Natural killer cell (primary cell): ENCODE measurements at regions of chr21 and their contacts with region 1.

Region 1: DNA sequence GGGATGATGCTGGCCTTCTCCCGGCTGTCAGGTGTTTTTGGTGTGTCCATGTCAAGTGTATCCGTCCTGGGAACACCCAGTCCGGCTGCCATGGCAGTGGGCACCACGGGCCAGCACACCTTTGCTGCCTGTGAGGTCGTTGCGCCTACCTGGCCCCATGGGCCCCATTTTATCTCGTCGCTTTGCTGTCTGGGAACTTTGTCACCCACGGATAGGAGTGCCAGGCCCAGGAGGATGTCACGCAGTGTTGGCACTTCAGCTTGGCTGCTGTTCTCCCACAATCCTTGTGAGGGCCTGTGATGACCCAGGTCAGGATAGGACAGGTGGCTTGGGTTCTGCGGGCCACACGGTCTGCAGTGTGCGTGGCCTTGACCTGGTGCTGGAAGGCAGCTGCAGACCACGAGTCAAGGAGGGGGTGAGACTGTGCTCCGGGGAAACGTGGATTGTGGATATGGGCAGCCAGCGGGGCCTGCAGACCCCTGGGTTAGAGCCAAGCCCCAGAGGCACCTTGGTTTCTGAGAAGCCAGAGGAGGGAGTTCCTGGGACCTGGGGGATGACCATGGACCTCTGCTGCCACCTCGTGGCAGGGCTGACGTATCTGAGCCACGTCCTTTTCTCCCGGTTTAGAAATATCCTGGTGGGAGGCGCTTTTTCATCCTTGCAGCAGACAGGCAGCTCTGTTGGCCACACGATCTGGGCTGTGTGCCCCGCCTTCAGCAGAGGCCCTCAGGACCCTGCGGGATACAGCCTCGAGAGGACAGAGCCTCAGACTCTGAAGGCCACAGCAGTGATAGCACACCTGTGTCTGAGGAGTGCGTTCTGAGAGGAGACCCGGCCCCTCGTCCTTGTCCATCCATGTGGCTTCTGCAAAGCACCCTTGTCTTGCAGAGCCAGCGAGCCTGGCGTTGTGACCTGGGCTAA is 161.1 kb upstream of the COL6A1 start:
- DNase-seq: peak; percentile 36 to 90
- ATAC-seq: peak; percentile 64 to 78 (median 67)
- H3K4me3 ChIP-seq: no peak overlapping the region
- H3K4me3 Mint-ChIP-seq: no peak overlapping the region
- H3K27ac ChIP-seq: no peak overlapping the region
- H3K27ac Mint-ChIP-seq: no peak overlapping the region
- H3K4me1 ChIP-seq: no peaks in the 10 kb centered on the region
- H3K4me1 Mint-ChIP-seq: no peaks in the 10 kb centered on the region
- H3K27me3 ChIP-seq: no peaks in the 10 kb centered on the region
- H3K27me3 Mint-ChIP-seq: peaks cover 14 to 20% of the 10 kb centered on the region in 2 donors
- CTCF ChIP-seq: peak; percentile 53

Region 2: GRCh38 chr21:44742418-44743153 is 1077.8 kb before region 1 on chr21:
- intact Hi-C with region 1: no loop called
- DNase-seq: peak in 1 of 2 donors; percentile 67
- ATAC-seq: no peak
- H3K4me3 ChIP-seq: no peak overlapping the region
- H3K4me3 Mint-ChIP-seq: no peak overlapping the region
- H3K27ac ChIP-seq: no peak overlapping the region
- H3K27ac Mint-ChIP-seq: no peak overlapping the region
- H3K4me1 ChIP-seq: no peaks in the 10 kb centered on the region
- H3K4me1 Mint-ChIP-seq: peaks cover 4 to 6% of the 10 kb centered on the region in 2 donors
- H3K27me3 ChIP-seq: no peaks in the 10 kb centered on the region
- H3K27me3 Mint-ChIP-seq: peaks cover 0 to 2% of the 10 kb centered on the region in 2 donors
- CTCF ChIP-seq: no peak

Region 3: DNA sequence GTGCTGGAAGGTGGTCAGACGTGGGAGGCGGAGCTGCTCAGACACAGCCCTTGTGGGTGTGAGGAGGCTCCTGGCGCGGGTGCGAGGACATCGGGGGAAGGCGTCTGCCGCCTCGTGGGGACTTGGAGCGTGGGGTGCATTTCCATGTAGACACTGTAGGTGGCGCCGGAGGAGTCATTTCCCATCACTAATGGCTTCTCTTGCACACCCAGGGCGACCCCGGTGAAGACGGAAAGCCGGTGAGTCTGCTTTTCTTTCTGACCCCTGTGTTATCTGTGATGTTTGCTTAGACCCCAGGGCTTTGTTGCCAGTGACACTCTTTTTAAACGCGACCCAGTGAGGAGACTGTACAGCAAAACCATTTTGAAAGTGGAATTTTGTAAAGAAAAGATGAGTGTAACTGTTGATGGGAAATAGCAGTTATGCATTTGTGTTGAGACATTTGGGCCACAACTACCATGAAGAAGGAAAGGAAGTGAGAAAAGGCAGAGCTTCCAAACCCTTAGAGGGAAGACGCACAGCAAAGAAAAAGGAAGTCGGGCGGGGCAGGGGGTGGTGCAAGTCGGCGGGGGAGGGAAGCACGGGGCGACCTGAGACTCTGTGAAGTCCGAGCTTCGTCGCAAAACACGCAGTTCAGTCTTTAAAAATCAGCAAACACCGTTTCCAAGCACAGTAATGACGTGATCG is 342.2 kb before region 1 on chr21:
- intact Hi-C with region 1: loop called (anchors 1 kb)
- DNase-seq: peak; percentile 69 to 92
- ATAC-seq: peak; percentile 90 to 93 (median 91)
- H3K4me3 ChIP-seq: peak overlapping the region; percentile 38
- H3K4me3 Mint-ChIP-seq: peak overlapping the region; percentile 96
- H3K27ac ChIP-seq: peak overlapping the region; percentile 77
- H3K27ac Mint-ChIP-seq: peak overlapping the region; percentile 88 to 89
- H3K4me1 ChIP-seq: peaks cover 47% of the 10 kb centered on the region
- H3K4me1 Mint-ChIP-seq: peaks cover 24 to 34% of the 10 kb centered on the region in 2 donors
- H3K27me3 ChIP-seq: no peaks in the 10 kb centered on the region
- H3K27me3 Mint-ChIP-seq: no peaks in the 10 kb centered on the region
- CTCF ChIP-seq: peak; percentile 92

Region 4: GRCh38 chr21:45554477-45555175 is 265.8 kb before region 1 on chr21:
- intact Hi-C with region 1: loop called (anchors 10 kb)
- DNase-seq: peak; percentile 92 to 93
- ATAC-seq: peak; percentile 88 to 96 (median 93)
- H3K4me3 ChIP-seq: peak overlapping the region; percentile 64
- H3K4me3 Mint-ChIP-seq: peak overlapping the region; percentile 97
- H3K27ac ChIP-seq: peak overlapping the region; percentile 61
- H3K27ac Mint-ChIP-seq: peak overlapping the region; percentile 72 to 89
- H3K4me1 ChIP-seq: peaks cover 39% of the 10 kb centered on the region
- H3K4me1 Mint-ChIP-seq: peaks cover 20 to 25% of the 10 kb centered on the region in 2 donors
- H3K27me3 ChIP-seq: no peaks in the 10 kb centered on the region
- H3K27me3 Mint-ChIP-seq: peaks cover 0 to 5% of the 10 kb centered on the region in 2 donors
- CTCF ChIP-seq: peak; percentile 64

Region 5: GRCh38 chr21:45836268-45836655 is 15.8 kb after region 1 on chr21:
- intact Hi-C with region 1: no loop called
- DNase-seq: no peak
- ATAC-seq: no peak
- H3K4me3 ChIP-seq: no peak overlapping the region
- H3K4me3 Mint-ChIP-seq: no peak overlapping the region
- H3K27ac ChIP-seq: no peak overlapping the region
- H3K27ac Mint-ChIP-seq: no peak overlapping the region
- H3K4me1 ChIP-seq: no peaks in the 10 kb centered on the region
- H3K4me1 Mint-ChIP-seq: no peaks in the 10 kb centered on the region
- H3K27me3 ChIP-seq: no peaks in the 10 kb centered on the region
- H3K27me3 Mint-ChIP-seq: no peaks in the 10 kb centered on the region
- CTCF ChIP-seq: no peak

Region 6: DNA sequence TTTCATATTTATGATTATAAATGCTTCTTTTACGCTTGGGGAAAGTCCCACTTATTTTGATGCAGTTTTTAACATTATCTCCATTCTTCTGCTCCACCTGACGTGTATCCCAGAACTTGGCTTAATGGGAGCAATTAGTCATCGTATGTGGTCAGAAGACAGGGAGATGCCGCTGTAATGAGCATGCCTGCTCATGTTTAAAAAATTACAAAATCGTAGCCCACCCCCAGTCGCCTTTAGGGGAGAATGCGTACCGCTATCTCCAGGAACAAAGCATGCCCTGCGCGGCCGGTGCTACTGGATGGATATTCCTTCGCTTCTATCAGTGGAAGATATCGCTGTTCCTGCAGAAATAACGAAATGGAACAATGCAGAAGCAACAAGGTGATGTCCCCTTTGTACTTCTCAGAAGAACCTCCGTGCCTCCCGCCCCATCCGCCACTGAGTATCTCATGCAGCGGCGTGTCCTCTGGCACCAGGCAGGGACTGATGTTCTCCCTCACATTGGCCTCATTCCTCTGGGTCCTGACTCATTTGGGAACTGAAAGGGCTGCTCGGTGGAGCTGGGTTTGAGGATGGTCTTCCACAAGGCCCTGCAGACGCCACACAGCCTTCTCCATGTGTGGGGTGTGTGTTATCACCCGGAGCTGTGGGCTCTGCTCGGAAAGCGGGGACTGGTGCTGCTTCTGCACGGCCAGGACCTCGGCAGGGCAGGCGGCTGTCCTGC is 44.8 kb after region 1 on chr21:
- intact Hi-C with region 1: no loop called
- DNase-seq: no peak
- ATAC-seq: no peak
- H3K4me3 ChIP-seq: no peak overlapping the region
- H3K4me3 Mint-ChIP-seq: no peak overlapping the region
- H3K27ac ChIP-seq: no peak overlapping the region
- H3K27ac Mint-ChIP-seq: no peak overlapping the region
- H3K4me1 ChIP-seq: peaks cover 16% of the 10 kb centered on the region
- H3K4me1 Mint-ChIP-seq: peaks cover 0 to 9% of the 10 kb centered on the region in 2 donors
- H3K27me3 ChIP-seq: no peaks in the 10 kb centered on the region
- H3K27me3 Mint-ChIP-seq: no peaks in the 10 kb centered on the region
- CTCF ChIP-seq: no peak